ENCODE measurements at regions of chr3 and their contacts with region 1.

Region 1: GRCh38 chr3:14402304-14402811 is at the start of gene SLC6A6:
- DNase-seq: peak; percentile 96
- H3K4me3 Mint-ChIP-seq: peak within 1 kb of the TSS; percentile 95
- H3K27ac Mint-ChIP-seq: peak within 1 kb of the TSS; percentile 99
- H3K4me1 Mint-ChIP-seq: peaks cover 53% of the 10 kb centered on the region
- H3K27me3 Mint-ChIP-seq: peaks cover 36% of the 10 kb centered on the region

Region 2: DNA sequence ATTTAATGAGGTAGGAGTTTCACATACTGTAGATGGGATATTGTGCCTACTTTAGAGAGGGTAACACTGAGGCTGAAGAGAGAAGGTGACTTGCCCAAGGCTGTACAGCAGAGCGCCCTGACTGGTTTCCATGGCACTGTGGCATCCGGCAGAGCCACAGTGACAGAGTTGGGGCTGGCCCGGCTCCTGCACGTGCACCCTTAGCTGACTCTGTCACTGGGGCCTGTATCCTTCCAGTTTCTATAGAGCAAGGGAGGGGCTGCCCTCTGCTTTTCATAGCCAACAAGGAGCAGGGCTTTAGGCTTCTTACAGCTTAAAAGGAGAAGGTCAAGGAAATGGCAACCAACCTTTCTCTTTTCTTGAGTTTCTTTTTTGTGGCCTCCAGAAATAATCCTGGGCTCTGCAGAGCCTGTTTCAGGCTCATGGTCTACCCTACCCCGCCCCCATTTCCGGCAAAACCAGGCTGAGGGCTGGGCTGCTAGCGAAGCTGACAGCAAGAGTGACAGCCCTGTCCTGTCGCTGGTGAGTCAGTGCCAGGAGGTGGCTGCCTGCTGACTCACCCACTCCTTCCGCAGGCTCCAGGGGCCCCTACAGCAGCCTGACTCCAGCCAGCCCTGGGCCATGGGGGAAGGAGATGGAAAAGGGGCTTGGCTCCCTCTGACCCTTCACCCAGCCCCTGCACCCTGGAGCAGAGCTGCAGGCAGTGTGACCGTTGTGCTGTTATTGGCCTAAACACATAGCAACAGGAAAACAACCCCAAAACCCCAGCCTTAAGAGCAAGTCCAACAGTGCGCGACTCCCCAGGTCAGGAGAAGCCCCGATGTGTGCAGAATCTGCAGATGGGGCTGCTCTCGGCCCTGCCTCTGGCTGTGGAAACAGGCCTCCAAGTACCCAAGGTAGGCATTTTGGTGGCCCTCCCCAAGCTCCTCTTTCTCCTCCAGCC is 29.8 kb after region 1 on chr3:
- CTCF ChIA-PET with region 1: interaction called, 21 read pairs
- DNase-seq: peak; percentile 97
- H3K4me3 Mint-ChIP-seq: peak overlapping the region; percentile 70
- H3K27ac Mint-ChIP-seq: peak overlapping the region; percentile 98
- H3K4me1 Mint-ChIP-seq: peaks cover 82% of the 10 kb centered on the region
- H3K27me3 Mint-ChIP-seq: no peaks in the 10 kb centered on the region

Region 3: GRCh38 chr3:14461748-14462324 is 59.5 kb after region 1 on chr3:
- CTCF ChIA-PET with region 1: interaction called, 15 read pairs
- DNase-seq: peak; percentile 62
- H3K4me3 Mint-ChIP-seq: no peak overlapping the region
- H3K27ac Mint-ChIP-seq: peak overlapping the region; percentile 74
- H3K4me1 Mint-ChIP-seq: peaks cover 4% of the 10 kb centered on the region
- H3K27me3 Mint-ChIP-seq: no peaks in the 10 kb centered on the region

Region 4: DNA sequence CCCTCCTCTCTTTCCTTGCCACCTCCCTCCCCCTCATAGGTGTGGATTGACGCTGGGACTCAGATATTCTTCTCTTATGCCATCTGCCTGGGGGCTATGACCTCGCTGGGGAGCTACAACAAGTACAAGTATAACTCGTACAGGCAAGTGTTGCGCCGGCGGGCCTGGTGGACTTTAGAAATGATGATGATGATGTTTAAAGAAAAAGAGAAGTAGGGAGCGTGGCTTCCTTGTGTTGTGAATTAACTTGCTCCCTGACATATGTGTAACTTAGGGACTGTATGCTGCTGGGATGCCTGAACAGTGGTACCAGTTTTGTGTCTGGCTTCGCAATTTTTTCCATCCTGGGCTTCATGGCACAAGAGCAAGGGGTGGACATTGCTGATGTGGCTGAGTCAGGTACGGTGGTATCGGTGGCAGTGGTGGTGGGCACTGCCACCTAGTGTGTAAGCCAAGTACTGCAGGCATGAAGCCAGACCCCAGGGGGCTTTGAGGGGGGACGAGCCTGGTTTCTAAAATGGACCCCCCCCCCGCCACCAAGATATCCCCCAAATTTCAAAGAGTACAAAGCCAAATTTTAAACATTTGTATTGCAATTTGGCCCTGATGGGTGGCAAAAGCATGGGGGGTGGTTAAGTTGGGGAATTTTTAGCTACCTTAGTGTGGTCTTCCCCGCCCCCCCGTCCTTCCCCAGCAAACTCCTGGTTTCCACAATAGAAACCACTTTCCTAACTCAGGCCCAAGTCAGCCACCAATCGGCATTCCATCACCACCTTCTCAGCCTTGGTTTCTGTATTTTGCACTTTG is 65.7 kb after region 1 on chr3:
- CTCF ChIA-PET with region 1: interaction called, 15 read pairs
- DNase-seq: peak; percentile 53
- H3K4me3 Mint-ChIP-seq: no peak overlapping the region
- H3K27ac Mint-ChIP-seq: no peak overlapping the region
- H3K4me1 Mint-ChIP-seq: peaks cover 2% of the 10 kb centered on the region
- H3K27me3 Mint-ChIP-seq: no peaks in the 10 kb centered on the region